Tibial artery (tissue), 4 donors: ENCODE measurements at regions of chr17 and their contacts with region 1.

Region 1: GRCh38 chr17:82698065-82698973 is at the start of gene RAB40B:
- DNase-seq: peak; percentile 99 to 100
- H3K4me3 ChIP-seq: peak within 1 kb of the TSS; percentile 72 to 93
- H3K27ac ChIP-seq: peak within 1 kb of the TSS; percentile 60 to 69
- H3K4me1 ChIP-seq: peaks cover 0 to 32% (median 21%) of the 10 kb centered on the region in 4 donors
- H3K27me3 ChIP-seq: no peaks in the 10 kb centered on the region
- CTCF ChIP-seq: no peak

Region 2: GRCh38 chr17:82582213-82582612 is 116.1 kb before region 1 on chr17:
- intact Hi-C with region 1: no loop called
- DNase-seq: no peak
- H3K4me3 ChIP-seq: no peak overlapping the region
- H3K27ac ChIP-seq: no peak overlapping the region
- H3K4me1 ChIP-seq: no peaks in the 10 kb centered on the region
- H3K27me3 ChIP-seq: no peaks in the 10 kb centered on the region
- CTCF ChIP-seq: no peak

Region 3: GRCh38 chr17:82592767-82593589 is 105.3 kb before region 1 on chr17:
- intact Hi-C with region 1: loop called (anchors 10 kb)
- DNase-seq: peak; percentile 71 to 91
- H3K4me3 ChIP-seq: peak overlapping the region; percentile 59 to 80
- H3K27ac ChIP-seq: peak overlapping the region; percentile 88 to 90
- H3K4me1 ChIP-seq: peaks cover 0 to 44% (median 35%) of the 10 kb centered on the region in 4 donors
- H3K27me3 ChIP-seq: no peaks in the 10 kb centered on the region
- CTCF ChIP-seq: no peak

Region 4: GRCh38 chr17:82751571-82752370 is 53.5 kb after region 1 on chr17 and contains the start of gene TBCD:
- intact Hi-C with region 1: loop called (anchors 5 kb)
- DNase-seq: peak; percentile 83 to 94
- H3K4me3 ChIP-seq: peak within 1 kb of the TSS; percentile 80 to 86
- H3K27ac ChIP-seq: peak within 1 kb of the TSS; percentile 81
- H3K4me1 ChIP-seq: peaks cover 0 to 25% (median 17%) of the 10 kb centered on the region in 4 donors
- H3K27me3 ChIP-seq: no peaks in the 10 kb centered on the region
- CTCF ChIP-seq: no peak